MCF 10A (cell line): ENCODE measurements at regions of chr18 and their contacts with region 1.

Region 1: GRCh38 chr18:58195278-58195765 is 151.3 kb downstream of the NEDD4L start:
- DNase-seq: peak; percentile 38
- H3K4me3 Mint-ChIP-seq: peak overlapping the region; percentile 75
- H3K27ac Mint-ChIP-seq: peak overlapping the region; percentile 32
- H3K4me1 Mint-ChIP-seq: peaks cover 23% of the 10 kb centered on the region
- H3K27me3 Mint-ChIP-seq: no peaks in the 10 kb centered on the region
- CTCF ChIP-seq: no peak

Region 2: DNA sequence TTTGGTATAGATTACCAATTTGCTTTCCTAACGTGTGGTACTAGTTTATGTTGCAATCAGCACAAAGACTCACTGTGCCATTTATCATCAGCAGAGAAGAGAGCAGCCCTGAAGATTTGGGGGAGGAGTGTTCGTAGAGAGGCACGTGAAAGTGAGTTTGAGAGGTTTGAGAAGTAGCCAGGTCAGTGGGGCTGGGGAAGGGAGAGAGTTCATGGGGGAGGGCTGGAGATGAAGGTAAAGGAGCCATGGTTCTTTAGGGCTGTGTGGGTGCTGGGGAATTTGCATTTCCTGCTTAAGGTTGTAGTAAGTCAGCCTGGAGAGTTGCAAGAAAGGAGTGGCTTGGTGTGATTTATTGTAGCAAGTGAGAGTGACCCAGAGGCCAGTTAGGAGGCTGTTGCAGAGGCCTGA is 20.8 kb after region 1 on chr18:
- CTCF ChIA-PET with region 1: interaction called, 6 read pairs
- POLR2A ChIA-PET with region 1: interaction called, 43 read pairs
- intact Hi-C with region 1: no loop called
- DNase-seq: peak; percentile 67
- H3K4me3 Mint-ChIP-seq: peak overlapping the region; percentile 52
- H3K27ac Mint-ChIP-seq: peak overlapping the region; percentile 33
- H3K4me1 Mint-ChIP-seq: peaks cover 48% of the 10 kb centered on the region
- H3K27me3 Mint-ChIP-seq: no peaks in the 10 kb centered on the region
- CTCF ChIP-seq: no peak